ENCODE measurements at regions of chr9 and their contacts with region 1.

Region 1: GRCh38 chr9:133184962-133185361 is 21.2 kb upstream of the GBGT1 start:
- DNase-seq: no peak
- ATAC-seq: no peak
- H3K4me3 Mint-ChIP-seq: no peak overlapping the region
- H3K27ac Mint-ChIP-seq: no peak overlapping the region
- H3K4me1 Mint-ChIP-seq: no peaks in the 10 kb centered on the region
- H3K27me3 Mint-ChIP-seq: peaks cover 38% of the 10 kb centered on the region
- CTCF ChIP-seq: no peak

Region 2: GRCh38 chr9:133144137-133144903 is 40.6 kb before region 1 on chr9:
- CTCF ChIA-PET with region 1: interaction called, 34 read pairs
- POLR2A ChIA-PET with region 1: interaction called, 3 read pairs
- DNase-seq: peak; percentile 82
- ATAC-seq: peak; percentile 50
- H3K4me3 Mint-ChIP-seq: peak overlapping the region; percentile 62
- H3K27ac Mint-ChIP-seq: no peak overlapping the region
- H3K4me1 Mint-ChIP-seq: peaks cover 24% of the 10 kb centered on the region
- H3K27me3 Mint-ChIP-seq: peaks cover 10% of the 10 kb centered on the region
- CTCF ChIP-seq: peak; percentile 98

Region 3: GRCh38 chr9:133205996-133206931 is 21.3 kb after region 1 on chr9:
- CTCF ChIA-PET with region 1: interaction called, 16 read pairs
- POLR2A ChIA-PET with region 1: no interaction called
- DNase-seq: no peak
- ATAC-seq: no peak
- H3K4me3 Mint-ChIP-seq: no peak overlapping the region
- H3K27ac Mint-ChIP-seq: no peak overlapping the region
- H3K4me1 Mint-ChIP-seq: no peaks in the 10 kb centered on the region
- H3K27me3 Mint-ChIP-seq: peaks cover 88% of the 10 kb centered on the region
- CTCF ChIP-seq: no peak

Region 4: GRCh38 chr9:133275105-133276000 is 90.4 kb after region 1 on chr9 and contains the start of gene ABO:
- CTCF ChIA-PET with region 1: interaction called, 50 read pairs
- POLR2A ChIA-PET with region 1: no interaction called
- DNase-seq: peak; percentile 47
- ATAC-seq: peak; percentile 75
- H3K4me3 Mint-ChIP-seq: peak within 1 kb of the TSS; percentile 72
- H3K27ac Mint-ChIP-seq: no peak within 1 kb of the TSS
- H3K4me1 Mint-ChIP-seq: no peaks in the 10 kb centered on the region
- H3K27me3 Mint-ChIP-seq: peaks cover 81% of the 10 kb centered on the region
- CTCF ChIP-seq: 0 out of 2 replicates have a peak, but pooled peaks have one; percentile 12
- total RNA-seq, gene ABO: 0.15 to 0.39 TPM (median 0.25 TPM) in 3 replicates

Region 5: GRCh38 chr9:133335878-133336811 is 151.2 kb after region 1 on chr9 and contains the start of gene SURF6:
- CTCF ChIA-PET with region 1: interaction called, 97 read pairs
- POLR2A ChIA-PET with region 1: no interaction called
- DNase-seq: peak; percentile 92
- ATAC-seq: peak; percentile 84
- H3K4me3 Mint-ChIP-seq: peak within 1 kb of the TSS; percentile 94
- H3K27ac Mint-ChIP-seq: peak within 1 kb of the TSS; percentile 96
- H3K4me1 Mint-ChIP-seq: peaks cover 24% of the 10 kb centered on the region
- H3K27me3 Mint-ChIP-seq: no peaks in the 10 kb centered on the region
- CTCF ChIP-seq: no peak
- total RNA-seq, gene SURF6: 48.8 to 67.2 TPM (median 54.1 TPM) in 3 replicates

Region 6: GRCh38 chr9:133437753-133438531 is 253.0 kb after region 1 on chr9:
- CTCF ChIA-PET with region 1: no interaction called
- POLR2A ChIA-PET with region 1: no interaction called
- DNase-seq: peak; percentile 63
- ATAC-seq: peak; percentile 82
- H3K4me3 Mint-ChIP-seq: no peak overlapping the region
- H3K27ac Mint-ChIP-seq: no peak overlapping the region
- H3K4me1 Mint-ChIP-seq: no peaks in the 10 kb centered on the region
- H3K27me3 Mint-ChIP-seq: no peaks in the 10 kb centered on the region
- CTCF ChIP-seq: no peak

Region 7: DNA sequence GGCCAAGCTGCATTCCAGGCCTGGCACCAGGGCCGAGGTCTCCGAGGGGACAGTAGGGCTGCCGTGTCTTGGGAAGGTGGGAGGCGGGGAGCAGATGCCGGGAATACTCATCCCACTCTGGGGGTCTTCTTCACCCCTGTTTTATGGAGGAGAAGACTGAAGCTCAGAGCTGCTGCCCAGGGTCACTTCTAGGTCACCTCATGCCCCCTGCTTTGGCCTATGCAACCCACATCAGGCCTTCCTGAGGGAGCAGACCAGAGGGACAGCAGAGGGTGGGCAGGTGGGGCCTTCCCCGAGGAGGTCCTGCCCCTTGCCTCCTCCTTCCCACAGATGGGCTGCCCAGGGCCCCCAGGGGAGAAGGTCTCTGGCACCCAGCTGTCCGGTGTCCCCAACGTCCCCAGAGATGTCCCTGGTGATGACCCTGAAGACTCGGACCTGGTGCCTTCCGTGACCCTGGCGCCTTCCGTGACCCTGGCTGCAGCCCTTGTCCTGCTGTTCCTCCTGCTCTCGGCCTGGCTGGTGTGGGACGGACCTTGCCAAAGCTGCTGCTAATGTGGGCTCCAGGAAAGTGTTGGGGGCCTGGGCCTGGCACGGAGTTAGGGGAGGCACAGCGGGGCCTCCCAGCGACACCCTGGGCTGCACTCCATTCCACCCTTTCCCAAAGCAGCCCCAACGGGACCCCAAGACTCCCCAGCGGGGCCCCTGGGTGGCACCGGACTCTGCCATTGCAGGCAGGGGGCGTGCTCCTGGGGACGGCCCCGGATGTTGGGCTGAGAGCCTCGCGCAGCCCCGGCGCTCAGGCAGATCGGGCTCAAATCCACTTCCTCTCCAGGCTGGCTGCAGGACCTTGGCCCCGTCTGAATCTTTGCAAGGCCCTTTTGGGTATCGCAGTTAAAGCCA is 300.6 kb after region 1 on chr9:
- CTCF ChIA-PET with region 1: interaction called, 12 read pairs
- POLR2A ChIA-PET with region 1: no interaction called
- DNase-seq: no peak
- ATAC-seq: peak; percentile 30
- H3K4me3 Mint-ChIP-seq: no peak overlapping the region
- H3K27ac Mint-ChIP-seq: no peak overlapping the region
- H3K4me1 Mint-ChIP-seq: no peaks in the 10 kb centered on the region
- H3K27me3 Mint-ChIP-seq: peaks cover 4% of the 10 kb centered on the region
- CTCF ChIP-seq: no peak

Region 8: GRCh38 chr9:133683586-133684120 is 498.7 kb after region 1 on chr9:
- CTCF ChIA-PET with region 1: no interaction called
- POLR2A ChIA-PET with region 1: no interaction called
- DNase-seq: no peak
- ATAC-seq: no peak
- H3K4me3 Mint-ChIP-seq: no peak overlapping the region
- H3K27ac Mint-ChIP-seq: peak overlapping the region; percentile 68
- H3K4me1 Mint-ChIP-seq: peaks cover 2% of the 10 kb centered on the region; the same call in 1 of the 2 replicates
- H3K27me3 Mint-ChIP-seq: no peaks in the 10 kb centered on the region
- CTCF ChIP-seq: no peak

Measured in WTC11 (cell line).